AG04449 (cell line): ENCODE measurements at regions of chr17 and their contacts with region 1.

Region 1: GRCh38 chr17:41579484-41580243 is 7.0 kb downstream of the KRT14 start:
- DNase-seq: no peak
- H3K4me3 ChIP-seq: no peak overlapping the region
- CTCF ChIP-seq: peak; percentile 83

Region 2: DNA sequence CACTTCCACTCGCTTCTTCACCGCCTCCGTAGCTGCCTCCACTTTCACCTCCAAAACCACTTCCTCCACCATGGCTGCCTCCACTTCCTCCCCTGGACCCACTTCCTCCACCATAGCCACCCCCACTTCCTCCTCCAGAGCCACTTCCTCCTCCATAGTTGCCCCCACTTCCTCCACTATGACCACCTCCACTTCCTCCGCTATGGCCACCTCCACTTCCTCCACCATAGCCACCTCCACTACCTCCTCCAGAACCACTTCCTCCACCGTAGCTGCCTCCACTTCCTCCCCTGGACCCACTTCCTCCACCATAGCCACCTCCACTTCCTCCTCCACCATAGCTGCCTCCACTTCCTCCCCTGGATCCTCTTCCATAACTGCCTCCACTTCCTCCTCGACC is 12.3 kb before region 1 on chr17:
- CTCF ChIA-PET with region 1: interaction called, 12 read pairs
- POLR2A ChIA-PET with region 1: no interaction called
- DNase-seq: no peak
- H3K4me3 ChIP-seq: no peak overlapping the region
- CTCF ChIP-seq: no peak

Region 3: GRCh38 chr17:41593311-41593981 is 13.8 kb after region 1 on chr17:
- CTCF ChIA-PET with region 1: interaction called, 23 read pairs
- POLR2A ChIA-PET with region 1: no interaction called
- DNase-seq: no peak
- H3K4me3 ChIP-seq: no peak overlapping the region
- CTCF ChIP-seq: no peak